ENCODE measurements at regions of chr6 and their contacts with region 1.

Region 1: DNA sequence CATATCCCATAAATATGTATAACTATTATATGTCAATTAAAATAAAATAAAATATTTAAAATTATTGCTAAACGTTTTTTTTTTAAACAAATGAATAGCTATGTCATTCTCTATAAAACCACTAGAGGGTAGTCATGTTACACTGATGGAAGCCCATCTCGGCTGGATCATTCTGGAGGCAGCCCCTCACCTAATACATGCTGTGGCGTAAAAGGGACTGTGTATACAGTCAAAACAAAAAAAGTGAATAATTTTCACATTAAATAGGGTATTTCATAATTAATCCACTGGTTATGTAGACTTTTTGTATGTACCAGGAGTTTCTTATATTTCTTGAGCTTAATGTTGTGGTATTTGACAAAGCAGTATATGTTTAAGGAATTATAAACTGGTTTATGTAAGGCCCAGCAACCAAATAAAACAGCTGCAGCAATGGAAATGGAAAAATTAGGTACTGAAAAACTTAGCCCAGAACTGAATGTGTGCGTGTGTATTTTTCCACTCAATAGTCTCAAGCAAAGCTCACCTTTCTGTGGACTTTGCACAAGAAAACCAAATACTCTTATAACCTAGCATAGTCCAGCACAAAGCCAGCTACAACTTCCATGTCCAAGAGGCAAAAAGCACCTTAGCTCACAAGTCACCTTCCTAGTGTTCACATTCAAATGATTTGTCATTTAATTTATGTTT is 81.7 kb downstream of the COL9A1 start:
- DNase-seq: no peak
- H3K4me3 Mint-ChIP-seq: no peak overlapping the region
- H3K27ac Mint-ChIP-seq: no peak overlapping the region
- H3K4me1 Mint-ChIP-seq: no peaks in the 10 kb centered on the region
- H3K27me3 Mint-ChIP-seq: peaks cover 9% of the 10 kb centered on the region

Region 2: GRCh38 chr6:70210462-70210861 is 10.7 kb before region 1 on chr6:
- CTCF ChIA-PET with region 1: interaction called, 12 read pairs
- DNase-seq: no peak
- H3K4me3 Mint-ChIP-seq: no peak overlapping the region
- H3K27ac Mint-ChIP-seq: no peak overlapping the region
- H3K4me1 Mint-ChIP-seq: no peaks in the 10 kb centered on the region
- H3K27me3 Mint-ChIP-seq: no peaks in the 10 kb centered on the region

Region 3: GRCh38 chr6:70231311-70231710 is 10.1 kb after region 1 on chr6:
- CTCF ChIA-PET with region 1: interaction called, 21 read pairs
- DNase-seq: no peak
- H3K4me3 Mint-ChIP-seq: no peak overlapping the region
- H3K27ac Mint-ChIP-seq: no peak overlapping the region
- H3K4me1 Mint-ChIP-seq: no peaks in the 10 kb centered on the region
- H3K27me3 Mint-ChIP-seq: peaks cover 8% of the 10 kb centered on the region

Region 4: DNA sequence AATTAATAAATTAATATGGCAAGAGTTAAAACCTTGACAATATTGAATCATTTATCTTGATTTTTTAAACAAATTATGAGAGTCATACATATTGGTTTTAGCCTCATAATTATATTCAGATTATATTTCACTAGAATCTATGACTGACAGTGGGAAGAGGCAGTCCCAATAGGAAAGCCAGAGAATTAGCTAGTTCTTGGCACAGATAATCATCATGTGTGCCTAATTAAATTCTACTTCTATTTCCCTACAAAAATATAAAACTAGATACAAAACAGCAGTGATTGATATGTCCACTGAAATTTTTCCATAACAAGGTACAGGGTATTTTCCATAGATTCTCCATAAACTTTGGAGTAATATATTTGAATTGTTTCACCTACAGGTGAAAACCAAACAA is 43.1 kb after region 1 on chr6:
- CTCF ChIA-PET with region 1: no interaction called
- DNase-seq: no peak
- H3K4me3 Mint-ChIP-seq: no peak overlapping the region
- H3K27ac Mint-ChIP-seq: no peak overlapping the region
- H3K4me1 Mint-ChIP-seq: no peaks in the 10 kb centered on the region
- H3K27me3 Mint-ChIP-seq: no peaks in the 10 kb centered on the region

Region 5: DNA sequence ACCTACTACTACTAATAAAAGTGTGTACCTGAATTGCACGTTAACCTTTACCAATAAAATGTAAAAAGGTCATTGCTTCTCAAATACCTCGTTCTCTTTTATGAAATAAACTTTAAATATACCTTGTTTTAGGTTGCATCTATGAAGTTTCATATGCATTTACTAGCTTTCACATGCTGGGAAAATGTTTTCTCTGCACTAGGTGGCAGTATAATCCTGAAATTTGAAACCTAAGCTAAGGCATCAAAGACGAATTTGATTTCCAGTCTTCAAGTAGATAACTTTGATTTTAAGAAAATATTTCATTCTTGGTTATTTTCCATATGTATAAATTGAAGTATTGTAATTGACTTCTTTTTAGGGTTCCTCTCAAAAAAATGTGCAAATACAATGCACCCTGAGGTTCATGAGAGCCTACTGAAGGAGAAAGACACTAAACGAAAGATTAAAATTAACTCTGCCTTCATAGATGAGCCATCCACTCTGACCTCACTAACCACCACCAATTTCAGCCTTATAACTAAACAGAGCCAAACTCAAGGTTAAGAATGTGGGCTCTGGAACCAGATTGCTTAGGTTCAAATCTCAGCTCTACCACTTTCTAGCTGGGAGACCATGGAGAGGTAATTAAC is 89.0 kb after region 1 on chr6:
- CTCF ChIA-PET with region 1: interaction called, 16 read pairs
- DNase-seq: no peak
- H3K4me3 Mint-ChIP-seq: no peak overlapping the region
- H3K27ac Mint-ChIP-seq: no peak overlapping the region
- H3K4me1 Mint-ChIP-seq: no peaks in the 10 kb centered on the region
- H3K27me3 Mint-ChIP-seq: peaks cover 4% of the 10 kb centered on the region

Region 6: DNA sequence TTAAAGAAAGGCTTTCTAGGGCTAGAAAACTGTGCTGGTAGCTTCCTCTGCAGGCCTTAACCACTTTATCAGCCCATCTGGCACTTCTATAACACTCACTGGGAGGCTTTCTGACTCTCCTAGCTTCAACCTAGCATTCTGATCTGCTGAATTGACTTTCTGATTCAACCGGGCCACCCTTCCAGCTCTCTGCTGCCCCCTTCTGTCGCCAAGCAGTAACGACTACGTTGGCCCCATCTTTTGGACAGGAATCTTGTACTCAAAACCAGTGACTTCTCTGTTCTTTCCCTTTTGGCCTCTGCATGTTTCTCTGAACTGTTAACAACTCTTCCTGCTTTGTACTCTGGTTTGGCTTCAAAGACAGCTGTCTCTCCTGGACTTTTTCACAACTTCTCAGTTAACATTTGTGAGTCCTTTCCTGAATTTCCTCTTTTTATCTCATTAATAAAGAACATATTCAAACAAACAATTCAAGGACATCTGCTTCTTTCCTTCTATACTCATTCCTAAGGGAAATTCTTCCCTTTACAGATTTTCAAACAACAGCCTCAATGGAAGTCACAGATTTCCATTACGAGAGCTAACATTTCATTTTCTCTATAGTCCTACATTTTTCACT is 148.3 kb after region 1 on chr6:
- CTCF ChIA-PET with region 1: interaction called, 52 read pairs
- DNase-seq: peak; percentile 76
- H3K4me3 Mint-ChIP-seq: no peak overlapping the region
- H3K27ac Mint-ChIP-seq: no peak overlapping the region
- H3K4me1 Mint-ChIP-seq: no peaks in the 10 kb centered on the region
- H3K27me3 Mint-ChIP-seq: peaks cover 7% of the 10 kb centered on the region

Region 7: DNA sequence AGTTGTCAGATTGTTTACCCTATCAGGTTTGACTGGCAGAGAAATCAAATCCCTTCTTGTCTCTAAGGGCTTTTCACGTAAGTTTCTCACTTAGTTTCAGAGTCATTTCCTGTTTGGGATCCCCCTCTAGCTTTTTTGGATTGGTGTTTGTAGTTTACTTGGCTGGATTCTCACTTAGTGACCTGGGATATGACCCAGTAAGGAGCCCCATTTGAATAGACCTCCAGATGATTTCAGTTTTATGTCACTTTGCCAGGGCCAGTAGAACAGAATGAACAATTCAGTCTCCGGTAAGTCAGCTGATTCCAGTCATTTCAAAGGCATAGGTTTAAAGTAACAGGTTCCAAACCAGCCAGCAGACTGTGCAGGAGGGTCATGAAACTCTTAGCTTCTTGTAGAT is 200.3 kb after region 1 on chr6:
- CTCF ChIA-PET with region 1: no interaction called
- DNase-seq: no peak
- H3K4me3 Mint-ChIP-seq: no peak overlapping the region
- H3K27ac Mint-ChIP-seq: no peak overlapping the region
- H3K4me1 Mint-ChIP-seq: no peaks in the 10 kb centered on the region
- H3K27me3 Mint-ChIP-seq: no peaks in the 10 kb centered on the region

Region 8: GRCh38 chr6:70538376-70538775 is 317.2 kb after region 1 on chr6:
- CTCF ChIA-PET with region 1: no interaction called
- DNase-seq: no peak
- H3K4me3 Mint-ChIP-seq: no peak overlapping the region
- H3K27ac Mint-ChIP-seq: no peak overlapping the region
- H3K4me1 Mint-ChIP-seq: peaks cover 5% of the 10 kb centered on the region
- H3K27me3 Mint-ChIP-seq: no peaks in the 10 kb centered on the region

Measured in activated naive CD4-positive, alpha-beta T cell treated with anti-CD3 and anti-CD28 coated beads, Interleukin-2, amount 10 ng/mL, durations not matched to agents 7 days and 5 days (primary cell).